ENCODE measurements at regions of chr22 and their contacts with region 1.

Region 1: DNA sequence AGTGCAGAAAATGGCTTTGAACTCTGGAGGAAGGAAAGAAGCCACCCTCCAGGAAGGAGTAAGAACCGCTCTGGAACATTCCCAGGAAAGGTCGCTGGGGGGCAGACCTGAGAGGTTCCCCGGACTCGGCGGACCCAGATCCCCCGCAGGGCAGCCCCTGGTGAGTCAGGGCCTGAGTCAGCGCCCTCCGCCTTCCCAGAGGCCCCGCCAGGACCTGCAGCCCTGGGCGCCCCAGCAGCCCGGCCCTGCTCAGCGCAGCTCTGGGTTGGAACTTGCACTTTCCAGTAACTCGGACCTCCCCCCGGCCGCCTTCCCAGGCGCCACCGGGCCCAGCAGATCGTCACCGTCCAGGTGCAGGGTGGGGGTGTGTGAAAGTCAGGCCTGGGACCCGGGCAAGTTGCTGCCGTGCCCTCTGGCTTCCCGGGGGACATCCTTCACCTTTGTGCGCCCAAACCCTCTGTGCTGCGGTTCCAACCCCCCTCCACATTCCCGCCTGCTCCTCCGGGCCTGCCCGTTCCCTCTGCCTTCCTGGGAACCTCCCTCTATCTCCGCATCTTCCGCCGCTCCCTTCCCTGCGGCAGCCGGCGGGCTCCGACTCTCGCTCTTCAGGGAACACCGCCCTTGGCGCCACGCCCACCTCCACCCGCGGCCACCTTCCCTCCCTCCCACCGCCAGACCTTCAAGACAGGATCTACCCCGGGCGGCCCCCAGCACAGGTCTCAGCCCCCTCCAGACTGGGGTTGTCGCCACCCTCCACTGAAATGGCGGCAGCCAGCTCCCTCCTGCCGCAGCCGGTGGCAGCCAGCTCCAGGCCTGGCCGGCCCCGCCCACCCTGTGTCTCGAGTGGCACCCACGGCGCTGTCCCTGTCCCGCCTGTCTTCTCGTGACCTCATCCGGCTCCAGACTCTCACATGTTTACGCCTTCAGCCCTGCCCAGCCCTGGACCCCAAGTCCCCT is 36.8 kb upstream of the WNT7B start:
- DNase-seq: peak; percentile 66
- H3K4me3 Mint-ChIP-seq: peak overlapping the region; percentile 87
- H3K27ac Mint-ChIP-seq: peak overlapping the region; percentile 82
- H3K4me1 Mint-ChIP-seq: peaks cover 6% of the 10 kb centered on the region
- H3K27me3 Mint-ChIP-seq: peaks cover 12% of the 10 kb centered on the region

Region 2: GRCh38 chr22:46057762-46058420 is 44.2 kb after region 1 on chr22:
- intact Hi-C with region 1: loop called (anchors 1 kb)
- DNase-seq: peak; percentile 44
- H3K4me3 Mint-ChIP-seq: peak overlapping the region; percentile 34
- H3K27ac Mint-ChIP-seq: peak overlapping the region; percentile 76
- H3K4me1 Mint-ChIP-seq: peaks cover 49% of the 10 kb centered on the region
- H3K27me3 Mint-ChIP-seq: no peaks in the 10 kb centered on the region